ENCODE measurements at regions of chr4 and their contacts with region 1.

Region 1: GRCh38 chr4:81069706-81070331 is 39.3 kb downstream of the BMP3 start:
- DNase-seq: peak; percentile 90
- ATAC-seq: peak; percentile 98
- H3K4me3 ChIP-seq: no peak overlapping the region
- H3K27ac ChIP-seq: no peak overlapping the region
- H3K4me1 ChIP-seq: peaks cover 2% of the 10 kb centered on the region; the same call in 1 of the 2 replicates
- H3K27me3 ChIP-seq: no peaks in the 10 kb centered on the region; the same call in 1 of the 2 replicates
- CTCF ChIP-seq: peak; percentile 88
- POLR2A ChIP-seq: no peak
- RAD21 ChIP-seq: peak; percentile 89

Region 2: GRCh38 chr4:81102107-81102506 is 32.3 kb after region 1 on chr4:
- CTCF ChIA-PET with region 1: interaction called, 12 read pairs
- POLR2A ChIA-PET with region 1: no interaction called
- dilution Hi-C with region 1: no loop called
- in situ Hi-C with region 1: no loop called
- intact Hi-C with region 1: no loop called
- DNase-seq: no peak
- ATAC-seq: no peak
- H3K4me3 ChIP-seq: no peak overlapping the region
- H3K27ac ChIP-seq: no peak overlapping the region
- H3K4me1 ChIP-seq: no peaks in the 10 kb centered on the region
- H3K27me3 ChIP-seq: no peaks in the 10 kb centered on the region
- CTCF ChIP-seq: no peak
- POLR2A ChIP-seq: no peak
- RAD21 ChIP-seq: no peak

Region 3: DNA sequence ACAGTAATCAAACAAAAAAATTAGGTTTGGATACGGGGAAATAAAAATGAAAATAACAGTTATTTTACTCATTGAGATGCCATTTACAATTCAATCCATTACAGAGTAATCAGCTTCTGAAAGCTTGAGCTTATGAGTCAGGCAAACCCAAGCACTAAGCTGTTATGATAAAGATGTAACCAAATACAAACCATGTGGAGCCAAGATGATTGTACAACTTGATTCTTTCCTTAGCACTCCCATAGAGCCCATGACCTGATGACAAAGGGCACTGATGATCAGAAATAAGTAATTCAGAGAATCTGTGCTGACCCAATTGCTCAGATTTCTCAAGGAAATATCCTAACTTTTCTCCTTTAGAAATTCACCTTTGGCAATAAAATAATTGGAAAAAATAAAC is 185.7 kb after region 1 on chr4:
- CTCF ChIA-PET with region 1: no interaction called
- POLR2A ChIA-PET with region 1: no interaction called
- dilution Hi-C with region 1: no loop called
- in situ Hi-C with region 1: no loop called
- intact Hi-C with region 1: loop called (anchors 5 kb)
- DNase-seq: peak; percentile 93
- ATAC-seq: peak; percentile 93
- H3K4me3 ChIP-seq: no peak overlapping the region
- H3K27ac ChIP-seq: no peak overlapping the region
- H3K4me1 ChIP-seq: peaks cover 5% of the 10 kb centered on the region
- H3K27me3 ChIP-seq: no peaks in the 10 kb centered on the region
- CTCF ChIP-seq: no peak
- POLR2A ChIP-seq: no peak
- RAD21 ChIP-seq: no peak

Region 4: GRCh38 chr4:81369886-81370285 is 300.1 kb after region 1 on chr4:
- CTCF ChIA-PET with region 1: interaction called, 3 read pairs
- POLR2A ChIA-PET with region 1: no interaction called
- dilution Hi-C with region 1: no loop called
- in situ Hi-C with region 1: no loop called
- intact Hi-C with region 1: loop called (anchors 1 kb)
- DNase-seq: no peak
- ATAC-seq: peak; percentile 46; the same call in 1 of the 2 replicates
- H3K4me3 ChIP-seq: no peak overlapping the region
- H3K27ac ChIP-seq: no peak overlapping the region
- H3K4me1 ChIP-seq: no peaks in the 10 kb centered on the region
- H3K27me3 ChIP-seq: no peaks in the 10 kb centered on the region
- CTCF ChIP-seq: no peak; the same call in 1 of the 2 replicates
- POLR2A ChIP-seq: no peak
- RAD21 ChIP-seq: peak; percentile 19; the same call in 1 of the 2 replicates

Region 5: DNA sequence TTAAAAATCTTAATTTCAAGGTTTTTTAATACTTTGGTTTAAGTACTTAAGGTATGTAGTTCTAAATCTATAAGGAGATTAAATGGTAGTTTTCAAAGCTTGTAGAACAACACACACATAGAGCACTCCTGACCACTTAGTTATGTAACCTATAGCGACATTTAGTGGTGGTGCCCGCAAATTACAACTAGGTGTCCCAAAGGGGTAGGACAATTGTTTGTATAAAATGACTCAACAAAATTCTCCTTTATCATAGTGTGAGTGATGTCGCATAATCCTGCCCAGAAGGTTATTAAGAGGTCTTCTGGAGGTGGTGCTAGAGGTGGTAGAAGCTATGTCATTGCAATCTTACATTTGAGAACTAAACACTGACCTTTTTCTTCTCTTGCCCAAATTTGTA is 774.9 kb after region 1 on chr4:
- CTCF ChIA-PET with region 1: no interaction called
- POLR2A ChIA-PET with region 1: no interaction called
- dilution Hi-C with region 1: no loop called
- in situ Hi-C with region 1: no loop called
- intact Hi-C with region 1: loop called (anchors 5 kb)
- DNase-seq: peak; percentile 57
- ATAC-seq: peak; percentile 97
- H3K4me3 ChIP-seq: no peak overlapping the region
- H3K27ac ChIP-seq: no peak overlapping the region
- H3K4me1 ChIP-seq: no peaks in the 10 kb centered on the region
- H3K27me3 ChIP-seq: no peaks in the 10 kb centered on the region
- CTCF ChIP-seq: peak; percentile 76
- POLR2A ChIP-seq: no peak
- RAD21 ChIP-seq: peak; percentile 74

Measured in IMR-90 (cell line).